ENCODE measurements at regions of chr9 and their contacts with region 1.

Region 1: GRCh38 chr9:131046581-131047202 is 37.7 kb downstream of the LAMC3 start:
- DNase-seq: peak; percentile 39 to 69
- ATAC-seq: peak; percentile 80 to 90 (median 84)
- H3K4me3 ChIP-seq: no peak overlapping the region
- H3K27ac ChIP-seq: no peak overlapping the region
- H3K4me1 ChIP-seq: peaks cover 0 to 7% (median 0%) of the 10 kb centered on the region in 9 donors
- H3K27me3 ChIP-seq: peaks cover 0 to 6% (median 0%) of the 10 kb centered on the region in 7 donors
- CTCF ChIP-seq: peak; percentile 77 to 97 (median 94)

Region 2: DNA sequence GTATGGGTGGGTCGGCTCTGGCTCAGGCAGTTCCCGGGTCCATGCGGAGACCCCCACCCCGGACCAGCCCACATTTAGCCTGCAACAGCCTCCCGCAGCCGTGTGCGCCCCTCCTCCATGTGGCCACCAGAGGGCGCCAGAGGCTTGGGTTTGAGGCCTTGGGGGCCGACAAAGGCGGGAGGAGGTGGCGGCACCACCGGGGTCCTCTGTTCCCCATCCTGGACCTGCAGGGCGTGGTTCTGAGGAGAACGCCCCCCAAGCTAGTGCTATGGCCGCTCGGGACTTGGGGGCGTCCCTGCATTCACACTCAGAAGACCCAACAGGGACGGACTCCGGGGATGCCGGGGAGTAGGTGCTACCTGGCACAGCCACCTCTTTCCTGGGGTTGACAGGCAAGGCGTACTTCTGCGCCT is 585.5 kb before region 1 on chr9:
- intact Hi-C with region 1: loop called in 1 of 10 experiments (anchors 10 kb)
- DNase-seq: peak; percentile 48 to 69
- ATAC-seq: peak; percentile 36 to 75 (median 64)
- H3K4me3 ChIP-seq: no peak overlapping the region
- H3K27ac ChIP-seq: no peak overlapping the region
- H3K4me1 ChIP-seq: peaks cover 0 to 24% (median 11%) of the 10 kb centered on the region in 9 donors
- H3K27me3 ChIP-seq: peaks cover 0 to 4% (median 0%) of the 10 kb centered on the region in 7 donors
- CTCF ChIP-seq: peak; percentile 89 to 97 (median 94)

Region 3: DNA sequence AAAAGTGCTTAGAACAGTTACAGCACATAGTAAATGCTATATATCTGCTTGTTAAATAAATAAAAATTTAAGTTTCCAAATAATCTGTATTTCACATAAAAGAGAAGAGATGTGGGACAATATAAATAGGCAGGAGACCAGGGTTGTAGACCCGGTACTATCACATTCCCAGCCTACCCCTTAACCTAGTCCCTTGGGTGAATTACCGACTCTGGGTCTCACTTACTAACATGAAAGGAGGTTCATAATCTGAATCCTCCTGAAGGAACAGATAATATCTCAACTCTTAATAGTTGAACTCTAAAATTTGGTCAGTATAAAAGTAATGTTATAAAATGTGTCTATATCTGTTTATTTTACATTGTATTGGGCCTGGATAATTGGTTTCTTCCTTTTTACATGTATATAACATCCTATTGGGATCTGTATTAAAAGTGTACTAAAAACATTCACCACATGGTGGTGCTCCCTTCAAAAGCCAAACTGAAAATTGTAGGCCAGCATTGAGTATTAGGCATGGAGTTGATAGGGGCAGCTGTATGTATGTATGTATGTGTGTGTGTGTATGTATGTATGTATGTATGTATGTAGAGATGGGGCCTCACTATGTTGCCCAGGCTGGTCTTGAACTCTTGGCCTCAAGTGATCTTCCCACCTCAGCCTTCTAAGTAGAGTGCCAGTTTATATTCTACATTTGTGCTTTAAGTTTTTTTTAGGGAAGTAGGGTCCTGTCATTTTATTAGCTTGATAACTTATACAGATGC is 275.8 kb before region 1 on chr9:
- intact Hi-C with region 1: loop called in 1 of 10 experiments (anchors 5 kb)
- DNase-seq: no peak
- ATAC-seq: peak; percentile 44 to 78 (median 74)
- H3K4me3 ChIP-seq: no peak overlapping the region
- H3K27ac ChIP-seq: no peak overlapping the region
- H3K4me1 ChIP-seq: peaks cover 0 to 42% (median 28%) of the 10 kb centered on the region in 9 donors
- H3K27me3 ChIP-seq: no peaks in the 10 kb centered on the region
- CTCF ChIP-seq: peak; percentile 39 to 83 (median 68)

Region 4: GRCh38 chr9:130794923-130795495 is 251.7 kb before region 1 on chr9:
- intact Hi-C with region 1: no loop called
- DNase-seq: no peak
- ATAC-seq: peak in 2 of 8 donors; percentile 15 to 67
- H3K4me3 ChIP-seq: no peak overlapping the region
- H3K27ac ChIP-seq: peak overlapping the region in 7 of 10 donors; percentile 6 to 64 (median 35)
- H3K4me1 ChIP-seq: peaks cover 0 to 21% (median 6%) of the 10 kb centered on the region in 9 donors
- H3K27me3 ChIP-seq: no peaks in the 10 kb centered on the region
- CTCF ChIP-seq: no peak

Region 5: GRCh38 chr9:130866474-130866965 is 180.2 kb before region 1 on chr9:
- intact Hi-C with region 1: loop called in 8 of 10 experiments (anchors 5 to 10 kb)
- DNase-seq: peak in 1 of 2 donors; percentile 75
- ATAC-seq: peak in 5 of 8 donors; percentile 43 to 56 (median 47)
- H3K4me3 ChIP-seq: no peak overlapping the region
- H3K27ac ChIP-seq: peak overlapping the region in 1 of 10 donors; percentile 2
- H3K4me1 ChIP-seq: peaks cover 0 to 74% (median 36%) of the 10 kb centered on the region in 9 donors
- H3K27me3 ChIP-seq: no peaks in the 10 kb centered on the region
- CTCF ChIP-seq: peak; percentile 63 to 85 (median 77)

Region 6: DNA sequence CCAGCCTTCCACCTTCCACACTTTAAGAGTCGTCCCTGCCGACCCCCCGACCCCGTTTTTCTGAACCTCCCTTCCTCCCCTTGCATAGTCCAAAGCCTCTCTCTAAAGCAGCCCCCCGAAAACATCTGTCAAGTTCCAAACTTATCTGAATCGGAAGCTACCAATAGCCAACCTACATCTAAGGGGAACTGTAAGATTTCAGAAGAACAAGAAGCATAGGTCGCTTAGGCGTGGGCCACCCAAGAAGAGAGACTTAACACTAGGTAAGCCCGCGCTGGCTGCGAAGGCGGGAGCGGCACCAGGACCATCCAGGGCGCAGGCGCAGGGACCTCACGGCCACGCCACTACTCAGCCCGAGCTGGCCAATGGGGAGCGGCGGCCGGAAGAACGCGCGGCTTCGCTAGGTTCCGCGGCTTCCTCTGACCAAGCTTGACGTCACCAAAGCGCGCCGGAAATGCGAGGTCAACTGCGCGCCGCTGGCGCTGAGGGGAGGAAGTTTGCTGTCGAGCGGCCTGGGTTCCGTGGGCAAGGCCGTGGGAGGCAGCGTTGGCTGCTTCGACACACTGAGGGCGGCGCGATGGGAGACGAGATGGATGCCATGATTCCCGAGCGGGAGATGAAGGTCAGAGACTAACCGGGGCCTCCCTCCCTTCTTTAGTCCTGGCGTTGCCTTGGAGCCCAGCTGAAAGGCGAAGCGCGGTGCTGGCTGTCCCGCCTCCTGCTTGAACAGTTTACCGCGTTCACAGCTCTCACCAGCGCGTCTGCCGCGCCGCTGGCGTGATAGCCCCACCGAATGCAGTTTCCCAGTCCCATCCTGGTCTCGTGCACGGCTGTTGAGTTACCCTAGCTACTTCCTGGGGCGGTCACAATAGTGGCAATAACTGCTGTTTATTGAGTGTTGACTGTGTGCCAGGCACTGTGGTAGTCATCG is 78.7 kb after region 1 on chr9 and contains the start of gene NUP214:
- intact Hi-C with region 1: loop called in 3 of 10 experiments (anchors 10 kb)
- DNase-seq: peak; percentile 99
- ATAC-seq: peak; percentile 99 to 100 (median 100)
- H3K4me3 ChIP-seq: peak within 1 kb of the TSS; percentile 69 to 97 (median 83)
- H3K27ac ChIP-seq: peak within 1 kb of the TSS; percentile 12 to 92 (median 83)
- H3K4me1 ChIP-seq: peaks cover 3 to 23% (median 17%) of the 10 kb centered on the region in 9 donors
- H3K27me3 ChIP-seq: no peaks in the 10 kb centered on the region
- CTCF ChIP-seq: no peak
- total RNA-seq, gene NUP214: 17.8 to 27.1 (median 23.6) TPM